ENCODE measurements at regions of chr16 and their contacts with region 1.

Region 1: GRCh38 chr16:81181013-81181720 is 57.3 kb upstream of the BCO1 start:
- DNase-seq: peak; percentile 85
- ATAC-seq: peak; percentile 93

Region 2: GRCh38 chr16:81035398-81035974 is 145.7 kb before region 1 on chr16 and contains the start of gene ATMIN:
- intact Hi-C with region 1: loop called (anchors 10 kb)
- DNase-seq: peak; percentile 96
- ATAC-seq: peak; percentile 98
- total RNA-seq, gene ATMIN: 21.2 TPM

Region 3: DNA sequence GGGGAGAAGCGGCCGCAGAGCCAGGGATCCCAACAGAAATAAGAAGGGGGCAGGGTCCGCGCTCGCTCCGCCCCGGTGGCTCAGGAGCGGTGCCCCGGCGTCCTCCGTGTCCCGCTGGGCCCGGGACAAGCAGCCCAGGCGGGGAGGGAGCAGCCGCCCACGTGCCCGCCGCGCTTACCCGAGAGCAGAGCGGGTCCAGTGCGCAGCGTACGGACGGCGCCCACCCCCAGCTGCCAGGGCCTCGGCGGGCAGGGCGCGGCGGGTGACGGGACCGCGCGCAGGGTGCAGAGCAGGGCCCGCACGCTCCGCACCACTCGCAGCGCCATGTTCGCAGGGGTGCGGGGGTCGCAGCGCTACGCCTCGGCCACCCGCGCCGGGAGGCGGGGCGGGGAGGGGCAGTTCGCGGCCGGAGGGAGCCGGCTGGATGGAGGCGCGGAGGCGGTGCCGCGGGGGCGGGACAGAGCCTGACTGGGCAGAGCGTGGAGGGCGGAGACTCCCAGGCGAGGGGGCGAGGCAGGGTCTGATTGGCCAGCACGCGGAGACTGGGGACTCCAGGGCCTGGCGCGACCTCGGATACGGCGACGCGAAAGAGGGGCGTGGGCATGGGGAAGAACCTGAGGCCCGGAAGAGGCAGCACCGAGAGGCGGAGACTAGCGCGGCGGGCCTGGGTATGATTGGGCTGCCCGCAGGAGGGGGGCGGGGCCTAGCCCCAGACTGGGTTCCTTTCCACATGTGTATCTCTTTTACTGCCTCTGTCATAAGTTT is 85.0 kb before region 1 on chr16 and contains the start of gene GCSH:
- intact Hi-C with region 1: loop called (anchors 5 kb)
- DNase-seq: peak; percentile 99
- ATAC-seq: peak; percentile 100
- total RNA-seq, gene GCSH: 52.3 TPM

Region 4: GRCh38 chr16:81204798-81205680 is 23.9 kb after region 1 on chr16:
- intact Hi-C with region 1: no loop called
- DNase-seq: no peak
- ATAC-seq: no peak

Region 5: GRCh38 chr16:81223391-81223829 is 42.2 kb after region 1 on chr16:
- intact Hi-C with region 1: loop called (anchors 2 kb)
- DNase-seq: no peak
- ATAC-seq: peak; percentile 94

Region 6: GRCh38 chr16:81279395-81279794 is 98.2 kb after region 1 on chr16:
- intact Hi-C with region 1: no loop called
- DNase-seq: no peak
- ATAC-seq: no peak